Activated naive CD4-positive, alpha-beta T cell treated with anti-CD3 and anti-CD28 coated beads for 36 hours (primary cell): ENCODE measurements at regions of chr10 and their contacts with region 1.

Region 1: GRCh38 chr10:75235375-75236177 is at the start of gene COMTD1:
- DNase-seq: peak; percentile 96
- H3K4me3 Mint-ChIP-seq: peak within 1 kb of the TSS; percentile 80
- H3K27ac Mint-ChIP-seq: peak within 1 kb of the TSS; percentile 84
- H3K4me1 Mint-ChIP-seq: peaks cover 18% of the 10 kb centered on the region
- H3K27me3 Mint-ChIP-seq: no peaks in the 10 kb centered on the region
- total RNA-seq, gene COMTD1: 33.2 to 34.8 TPM

Region 2: DNA sequence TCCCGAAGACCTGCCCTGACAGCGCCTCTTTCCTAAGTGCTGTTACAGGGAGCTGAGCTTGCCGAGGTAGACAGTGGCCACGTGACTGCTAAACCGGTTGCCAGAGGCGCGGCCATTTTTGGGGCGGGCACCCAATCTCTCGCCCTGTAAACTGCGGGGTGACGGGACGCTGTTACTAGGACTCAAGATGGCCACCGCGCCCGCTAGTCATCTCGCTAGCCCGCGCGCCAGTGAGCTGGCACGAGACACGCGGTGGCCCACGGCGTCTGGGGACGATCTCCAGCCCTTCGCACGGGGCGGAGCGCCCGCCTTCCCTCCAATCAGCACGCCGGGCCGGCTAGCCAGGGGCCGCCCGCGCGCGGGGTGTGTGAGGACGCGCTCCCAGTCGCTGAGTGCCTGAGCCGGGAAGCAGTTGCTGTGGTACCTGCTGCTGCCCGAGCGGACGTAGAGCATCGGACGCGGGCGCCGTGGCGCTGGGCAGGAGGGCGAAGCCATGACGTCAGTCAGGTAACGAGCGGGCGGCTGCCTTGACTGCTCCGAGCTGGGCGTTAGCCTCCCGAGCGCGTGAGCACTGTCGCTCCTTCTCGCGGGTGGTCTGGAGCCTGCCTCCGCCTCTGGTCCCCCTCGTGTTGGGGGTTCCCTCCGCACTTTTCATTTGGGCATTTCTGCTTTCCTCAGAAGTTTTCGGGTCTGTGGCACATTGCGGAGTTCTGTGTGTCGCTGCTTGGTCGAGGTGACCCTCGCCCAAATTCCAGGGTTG is 1059.0 kb before region 1 on chr10:
- CTCF ChIA-PET with region 1: no interaction called
- intact Hi-C with region 1: loop called (anchors 1 kb)
- DNase-seq: peak; percentile 96
- H3K4me3 Mint-ChIP-seq: peak overlapping the region; percentile 90
- H3K27ac Mint-ChIP-seq: peak overlapping the region; percentile 93
- H3K4me1 Mint-ChIP-seq: peaks cover 32% of the 10 kb centered on the region
- H3K27me3 Mint-ChIP-seq: no peaks in the 10 kb centered on the region

Region 3: DNA sequence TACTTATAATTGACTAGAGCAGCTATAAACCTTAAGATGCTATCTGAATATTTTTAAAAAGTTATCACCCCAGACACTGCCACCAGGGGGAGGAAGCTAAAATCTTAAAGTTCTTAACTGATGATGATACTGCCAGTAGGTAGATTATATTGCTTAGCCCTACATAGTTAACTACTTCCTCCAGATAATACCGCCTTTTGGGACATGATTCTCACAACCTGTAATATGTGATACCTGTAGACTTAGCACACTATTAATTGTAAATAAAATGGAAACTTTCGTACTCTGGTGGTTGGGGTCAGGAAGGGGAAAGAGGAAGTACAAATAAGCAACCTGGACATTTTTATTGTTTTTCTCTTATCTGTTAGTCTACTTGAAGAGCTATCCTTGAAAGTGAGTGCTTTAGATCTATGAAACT is 815.6 kb before region 1 on chr10:
- CTCF ChIA-PET with region 1: no interaction called
- intact Hi-C with region 1: loop called (anchors 2 kb)
- DNase-seq: peak; percentile 55
- H3K4me3 Mint-ChIP-seq: no peak overlapping the region
- H3K27ac Mint-ChIP-seq: no peak overlapping the region
- H3K4me1 Mint-ChIP-seq: peaks cover 6% of the 10 kb centered on the region
- H3K27me3 Mint-ChIP-seq: no peaks in the 10 kb centered on the region

Region 4: DNA sequence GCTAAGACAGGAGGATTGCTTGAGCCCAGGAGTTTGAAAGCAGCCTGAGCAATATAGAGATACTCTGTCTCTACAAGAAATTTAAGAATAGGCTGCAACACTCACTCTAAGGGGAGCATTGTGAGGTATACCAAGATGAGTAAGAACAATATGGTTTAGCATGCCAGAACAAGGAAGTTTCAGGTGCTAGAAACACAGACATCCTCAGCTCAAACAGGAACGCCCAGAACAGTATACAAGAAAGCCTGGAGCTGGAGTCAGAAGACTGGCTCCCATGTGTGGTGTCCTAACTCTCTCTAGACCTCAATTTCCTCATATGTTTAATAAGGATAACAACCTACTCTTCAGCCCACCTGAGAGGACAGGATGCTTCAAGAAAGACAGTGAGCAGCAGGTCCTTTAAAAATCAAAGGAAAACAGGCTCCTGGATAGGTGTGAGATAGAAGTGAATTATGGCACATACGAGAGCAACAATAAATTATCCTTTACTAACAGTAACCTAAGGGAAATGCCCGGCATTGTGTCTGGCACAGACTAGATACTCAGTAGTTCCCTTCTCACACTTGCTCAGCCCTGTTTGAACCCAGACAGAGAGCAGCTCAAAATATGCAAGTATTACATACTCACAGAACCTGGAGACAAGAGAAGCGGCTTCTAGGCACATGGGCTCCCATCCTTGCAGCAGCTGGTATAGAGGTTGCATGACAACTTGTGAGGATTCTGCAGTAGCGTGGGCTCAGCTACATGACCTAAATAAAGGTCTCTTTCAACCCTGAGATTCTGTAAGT is 363.8 kb before region 1 on chr10:
- CTCF ChIA-PET with region 1: no interaction called
- intact Hi-C with region 1: loop called (anchors 10 kb)
- DNase-seq: peak; percentile 53
- H3K4me3 Mint-ChIP-seq: peak overlapping the region; percentile 62
- H3K27ac Mint-ChIP-seq: peak overlapping the region; percentile 73
- H3K4me1 Mint-ChIP-seq: peaks cover 61% of the 10 kb centered on the region
- H3K27me3 Mint-ChIP-seq: no peaks in the 10 kb centered on the region

Region 5: DNA sequence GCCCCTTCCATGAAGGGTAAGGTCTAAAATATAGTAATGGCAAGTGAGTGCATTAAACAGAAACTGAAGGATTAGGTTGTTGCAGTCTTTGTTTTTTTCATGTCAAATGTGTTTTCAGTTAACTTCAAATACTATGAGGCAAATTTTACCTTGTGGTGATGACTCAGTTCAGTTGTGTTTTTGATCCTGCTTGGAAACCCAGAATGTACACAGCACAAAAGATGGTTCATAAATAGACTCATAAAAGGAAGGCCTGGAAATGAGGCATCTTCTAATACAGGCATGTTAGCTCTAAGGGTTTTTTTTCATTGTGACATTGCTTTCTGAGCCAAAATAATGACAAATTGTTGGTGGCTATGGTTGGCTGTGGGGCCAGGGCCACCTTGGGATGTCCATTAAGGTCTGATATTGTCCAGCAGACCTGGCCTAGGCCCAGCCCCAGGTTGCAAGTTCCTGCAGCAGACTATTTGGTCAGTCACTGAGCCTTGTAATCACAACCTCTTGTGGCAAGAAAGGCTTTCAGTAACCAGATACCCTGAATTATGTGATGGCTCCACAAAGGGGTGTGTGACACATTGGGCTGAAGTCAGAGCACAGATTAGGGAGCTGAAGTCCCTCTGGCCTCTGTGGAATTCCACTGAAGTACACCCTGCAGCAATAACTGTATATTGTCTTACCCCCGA is 193.1 kb before region 1 on chr10:
- CTCF ChIA-PET with region 1: interaction called, 3 read pairs
- intact Hi-C with region 1: loop called (anchors 2 kb)
- DNase-seq: peak; percentile 30
- H3K4me3 Mint-ChIP-seq: peak overlapping the region; percentile 20
- H3K27ac Mint-ChIP-seq: peak overlapping the region; percentile 87
- H3K4me1 Mint-ChIP-seq: peaks cover 45% of the 10 kb centered on the region
- H3K27me3 Mint-ChIP-seq: peaks cover 7% of the 10 kb centered on the region

Region 6: DNA sequence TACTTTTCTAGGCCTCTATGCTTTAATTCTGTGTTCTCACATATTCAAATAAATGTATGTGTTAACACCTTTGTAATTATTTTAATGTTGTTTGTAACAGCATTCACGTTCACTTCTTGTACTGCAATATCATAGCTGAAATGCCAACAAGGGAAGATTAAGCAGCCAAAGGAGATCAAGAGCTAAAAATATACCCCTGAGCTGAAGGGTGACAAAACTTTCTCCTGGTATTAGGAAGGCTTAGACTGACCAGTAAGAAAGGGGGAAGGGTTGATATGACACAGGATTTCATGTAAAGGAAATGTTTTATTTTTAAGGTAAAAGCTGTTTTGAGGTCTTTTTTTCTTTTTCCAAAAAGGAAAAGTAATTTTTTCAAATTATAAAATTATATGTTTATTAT is 65.4 kb before region 1 on chr10:
- CTCF ChIA-PET with region 1: no interaction called
- intact Hi-C with region 1: no loop called
- DNase-seq: no peak
- H3K4me3 Mint-ChIP-seq: no peak overlapping the region
- H3K27ac Mint-ChIP-seq: no peak overlapping the region
- H3K4me1 Mint-ChIP-seq: peaks cover 31% of the 10 kb centered on the region
- H3K27me3 Mint-ChIP-seq: no peaks in the 10 kb centered on the region

Region 7: GRCh38 chr10:75187961-75188426 is 47.6 kb before region 1 on chr10:
- CTCF ChIA-PET with region 1: interaction called, 42 read pairs
- intact Hi-C with region 1: loop called (anchors 1 kb)
- DNase-seq: peak; percentile 82
- H3K4me3 Mint-ChIP-seq: no peak overlapping the region
- H3K27ac Mint-ChIP-seq: no peak overlapping the region
- H3K4me1 Mint-ChIP-seq: peaks cover 8% of the 10 kb centered on the region
- H3K27me3 Mint-ChIP-seq: no peaks in the 10 kb centered on the region

Region 8: DNA sequence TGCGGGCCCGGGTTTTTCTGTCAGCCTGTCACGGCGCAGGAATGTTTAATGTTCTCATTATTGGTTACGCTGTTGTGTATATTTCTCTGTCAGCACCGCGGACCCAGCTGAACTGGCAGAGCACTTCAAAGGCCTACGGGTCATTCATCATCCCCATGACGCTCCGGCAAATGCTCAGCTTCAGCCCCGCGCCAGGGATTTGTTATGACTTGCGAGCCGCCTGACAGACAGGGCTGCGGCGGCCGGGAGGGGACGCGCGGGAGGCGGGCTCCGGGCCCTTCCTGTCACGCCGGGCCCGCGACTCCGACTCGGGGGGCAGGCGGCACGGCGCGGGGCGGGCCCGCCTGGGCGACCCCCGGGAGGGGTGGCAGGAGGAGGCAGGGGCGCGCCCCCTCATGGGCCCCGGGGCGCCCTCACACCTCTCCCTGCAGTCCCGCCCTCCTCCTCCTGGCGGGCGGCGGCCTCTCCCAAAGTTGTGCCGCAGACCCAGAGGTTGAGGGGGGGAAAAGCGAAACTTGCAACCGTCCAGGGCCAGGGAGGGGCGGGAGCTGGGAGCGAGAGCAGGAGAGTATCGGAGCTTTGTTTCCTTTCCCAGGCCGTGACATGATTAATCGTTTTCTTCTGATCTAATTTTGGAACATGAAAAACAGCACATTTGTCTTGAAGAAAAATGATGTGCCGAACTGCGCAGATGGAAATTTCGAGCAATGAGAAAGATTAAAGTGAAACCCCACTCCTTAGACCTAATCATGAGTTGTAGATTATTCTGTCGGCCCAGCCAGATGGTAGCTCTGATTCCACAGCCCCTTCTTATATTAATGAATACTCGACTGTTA is 59.5 kb after region 1 on chr10:
- CTCF ChIA-PET with region 1: interaction called, 3 read pairs
- intact Hi-C with region 1: loop called (anchors 2 kb)
- DNase-seq: peak; percentile 93
- H3K4me3 Mint-ChIP-seq: peak overlapping the region; percentile 57
- H3K27ac Mint-ChIP-seq: no peak overlapping the region
- H3K4me1 Mint-ChIP-seq: peaks cover 5% of the 10 kb centered on the region
- H3K27me3 Mint-ChIP-seq: peaks cover 4% of the 10 kb centered on the region

Region 9: GRCh38 chr10:75982611-75983369 is 747.2 kb after region 1 on chr10:
- CTCF ChIA-PET with region 1: no interaction called
- intact Hi-C with region 1: no loop called
- DNase-seq: no peak
- H3K4me3 Mint-ChIP-seq: no peak overlapping the region
- H3K27ac Mint-ChIP-seq: no peak overlapping the region
- H3K4me1 Mint-ChIP-seq: no peaks in the 10 kb centered on the region
- H3K27me3 Mint-ChIP-seq: no peaks in the 10 kb centered on the region